Activated CD4-positive, alpha-beta T cell treated with anti-CD3 and anti-CD28 coated beads, Interleukin-2, amount 10 ng/mL, durations not matched to agents 24 days and 14 days (primary cell): ENCODE measurements at regions of chr12 and their contacts with region 1.

Region 1: GRCh38 chr12:76031537-76032073 is at the start of gene PHLDA1:
- DNase-seq: peak; percentile 98
- H3K4me3 Mint-ChIP-seq: peak within 1 kb of the TSS; percentile 99
- H3K27ac Mint-ChIP-seq: peak within 1 kb of the TSS; percentile 99
- H3K4me1 Mint-ChIP-seq: peaks cover 35% of the 10 kb centered on the region
- H3K27me3 Mint-ChIP-seq: peaks cover 2% of the 10 kb centered on the region
- total RNA-seq, gene PHLDA1: 59.6 and 60.7 TPM in 2 replicates

Region 2: GRCh38 chr12:75480469-75480949 is 551.1 kb before region 1 on chr12 and contains the start of gene GLIPR1:
- intact Hi-C with region 1: loop called (anchors 2 kb)
- DNase-seq: peak; percentile 92
- H3K4me3 Mint-ChIP-seq: peak within 1 kb of the TSS; percentile 77
- H3K27ac Mint-ChIP-seq: peak within 1 kb of the TSS; percentile 91
- H3K4me1 Mint-ChIP-seq: peaks cover 67% of the 10 kb centered on the region
- H3K27me3 Mint-ChIP-seq: peaks cover 2% of the 10 kb centered on the region
- total RNA-seq, gene GLIPR1: 4.3 and 5.3 TPM in 2 replicates

Region 3: GRCh38 chr12:75641031-75641780 is 390.4 kb before region 1 on chr12:
- intact Hi-C with region 1: loop called (anchors 1 kb)
- DNase-seq: peak; percentile 78
- H3K4me3 Mint-ChIP-seq: peak overlapping the region; percentile 1
- H3K27ac Mint-ChIP-seq: peak overlapping the region; percentile 79
- H3K4me1 Mint-ChIP-seq: peaks cover 31% of the 10 kb centered on the region
- H3K27me3 Mint-ChIP-seq: no peaks in the 10 kb centered on the region

Region 4: GRCh38 chr12:75913502-75914351 is 117.9 kb before region 1 on chr12:
- intact Hi-C with region 1: loop called (anchors 1 kb)
- DNase-seq: peak; percentile 63
- H3K4me3 Mint-ChIP-seq: no peak overlapping the region
- H3K27ac Mint-ChIP-seq: peak overlapping the region; percentile 65
- H3K4me1 Mint-ChIP-seq: peaks cover 25% of the 10 kb centered on the region
- H3K27me3 Mint-ChIP-seq: peaks cover 3% of the 10 kb centered on the region

Region 5: DNA sequence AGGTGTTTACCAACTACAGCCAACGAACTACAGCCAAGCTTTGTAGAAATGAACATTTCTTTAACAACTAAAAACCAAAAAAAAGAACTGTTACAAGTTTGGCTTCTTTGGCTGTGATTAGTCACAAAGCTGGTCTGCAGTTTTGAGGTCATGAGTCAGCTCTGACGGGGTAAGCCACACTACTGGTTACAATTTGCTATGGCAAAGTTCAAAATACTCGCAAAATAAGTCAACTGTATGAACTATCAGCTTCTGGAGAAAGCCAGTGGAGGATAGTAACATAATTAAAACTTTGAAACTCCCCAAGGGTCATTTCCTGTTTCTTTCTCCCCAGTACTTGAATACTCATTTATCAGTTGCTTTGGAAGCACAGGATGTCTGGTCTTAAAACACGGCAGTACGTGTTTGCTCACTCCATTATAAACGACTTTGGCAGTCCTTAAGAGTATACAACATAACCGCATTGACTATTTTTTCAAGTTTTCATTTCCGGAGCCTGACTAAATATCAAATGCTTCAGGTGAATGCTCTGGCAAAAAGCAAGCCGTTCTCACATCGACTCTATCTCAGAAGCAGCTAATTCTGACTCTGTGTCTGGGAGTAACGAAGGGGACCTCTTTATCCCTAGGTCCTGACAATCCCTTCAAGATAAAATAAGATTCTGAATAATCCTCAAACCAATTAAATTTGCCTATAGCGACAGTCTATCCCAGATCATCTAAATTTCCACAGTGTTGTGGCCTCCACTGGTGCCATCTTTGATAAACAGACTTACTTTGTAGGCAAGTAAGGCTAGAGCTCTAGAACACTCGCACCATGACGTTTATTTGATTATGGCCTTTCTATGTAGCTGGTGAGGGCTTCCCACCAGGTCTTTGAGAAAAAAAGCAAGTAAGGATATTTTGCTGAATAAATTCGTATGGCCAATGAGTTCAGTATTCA is 10.6 kb before region 1 on chr12:
- intact Hi-C with region 1: loop called (anchors 1 kb)
- DNase-seq: peak; percentile 91
- H3K4me3 Mint-ChIP-seq: peak overlapping the region; percentile 72
- H3K27ac Mint-ChIP-seq: peak overlapping the region; percentile 98
- H3K4me1 Mint-ChIP-seq: peaks cover 51% of the 10 kb centered on the region
- H3K27me3 Mint-ChIP-seq: no peaks in the 10 kb centered on the region